ENCODE measurements at regions of chr5 and their contacts with region 1.

Region 1: GRCh38 chr5:83473346-83474163 is 2.0 kb downstream of the VCAN start:
- H3K4me3 Mint-ChIP-seq: peak overlapping the region; percentile 94
- H3K27ac Mint-ChIP-seq: peak overlapping the region; percentile 96
- H3K4me1 Mint-ChIP-seq: peaks cover 48% of the 10 kb centered on the region
- H3K27me3 Mint-ChIP-seq: peaks cover 18% of the 10 kb centered on the region

Region 2: GRCh38 chr5:82278095-82278918 is 1195.2 kb before region 1 on chr5 and contains the start of gene RPS23:
- intact Hi-C with region 1: loop called (anchors 10 kb)
- H3K4me3 Mint-ChIP-seq: peak within 1 kb of the TSS; percentile 90
- H3K27ac Mint-ChIP-seq: peak within 1 kb of the TSS; percentile 99
- H3K4me1 Mint-ChIP-seq: peaks cover 28% of the 10 kb centered on the region
- H3K27me3 Mint-ChIP-seq: no peaks in the 10 kb centered on the region

Region 3: DNA sequence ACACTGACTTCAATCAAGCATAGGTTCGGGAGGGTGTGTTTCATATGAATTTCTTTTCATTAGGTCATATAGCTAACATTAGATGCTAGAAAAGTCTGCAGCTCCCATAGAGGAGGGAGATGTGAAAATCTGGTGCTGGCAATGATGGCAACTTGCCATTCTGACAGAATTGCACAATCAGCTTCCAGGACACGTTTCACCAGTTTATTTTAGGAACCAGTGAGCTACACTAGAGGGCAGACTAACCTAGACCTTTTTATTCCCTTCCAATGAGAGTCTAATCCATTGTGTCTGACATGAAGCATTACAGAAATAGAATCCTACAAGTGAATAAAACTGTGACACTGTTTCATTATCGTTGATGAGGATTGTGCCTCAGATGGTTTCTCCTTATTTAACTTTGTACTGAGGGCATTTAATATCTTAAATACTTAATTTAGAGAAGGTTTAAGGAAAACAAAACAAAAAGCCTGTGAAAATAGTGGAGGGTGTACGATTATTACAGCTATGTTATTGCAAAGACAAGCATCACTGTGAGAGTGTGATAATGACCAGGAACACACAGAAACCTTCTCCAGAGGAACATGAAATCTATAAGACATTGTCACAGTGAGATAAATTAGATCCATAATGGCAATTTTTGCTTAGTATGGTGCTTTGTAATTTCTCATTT is 832.1 kb before region 1 on chr5:
- intact Hi-C with region 1: loop called (anchors 2 kb)
- H3K4me3 Mint-ChIP-seq: no peak overlapping the region
- H3K27ac Mint-ChIP-seq: no peak overlapping the region
- H3K4me1 Mint-ChIP-seq: peaks cover 7% of the 10 kb centered on the region
- H3K27me3 Mint-ChIP-seq: no peaks in the 10 kb centered on the region

Region 4: DNA sequence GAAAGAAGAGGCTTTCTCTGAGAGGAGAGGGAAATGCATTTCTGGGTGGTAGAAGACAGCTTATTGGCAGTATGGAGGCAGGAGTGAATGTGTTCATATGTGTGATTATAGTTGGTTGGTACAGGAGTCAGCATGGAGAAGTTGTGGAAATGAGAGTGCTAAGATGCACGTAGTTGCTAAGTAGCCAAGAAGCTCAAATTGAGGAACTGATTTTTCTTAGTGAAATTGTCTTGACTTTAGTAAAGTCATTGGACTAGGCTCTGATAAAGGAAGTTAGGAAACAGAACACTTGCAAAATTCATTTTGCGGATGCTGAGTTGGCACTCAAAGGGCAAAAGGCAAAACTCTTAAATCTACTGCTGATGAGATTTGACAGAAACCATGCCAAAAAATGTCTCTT is 160.9 kb before region 1 on chr5:
- intact Hi-C with region 1: loop called (anchors 5 kb)
- H3K4me3 Mint-ChIP-seq: peak overlapping the region; percentile 13
- H3K27ac Mint-ChIP-seq: peak overlapping the region; percentile 74
- H3K4me1 Mint-ChIP-seq: peaks cover 15% of the 10 kb centered on the region
- H3K27me3 Mint-ChIP-seq: no peaks in the 10 kb centered on the region

Region 5: DNA sequence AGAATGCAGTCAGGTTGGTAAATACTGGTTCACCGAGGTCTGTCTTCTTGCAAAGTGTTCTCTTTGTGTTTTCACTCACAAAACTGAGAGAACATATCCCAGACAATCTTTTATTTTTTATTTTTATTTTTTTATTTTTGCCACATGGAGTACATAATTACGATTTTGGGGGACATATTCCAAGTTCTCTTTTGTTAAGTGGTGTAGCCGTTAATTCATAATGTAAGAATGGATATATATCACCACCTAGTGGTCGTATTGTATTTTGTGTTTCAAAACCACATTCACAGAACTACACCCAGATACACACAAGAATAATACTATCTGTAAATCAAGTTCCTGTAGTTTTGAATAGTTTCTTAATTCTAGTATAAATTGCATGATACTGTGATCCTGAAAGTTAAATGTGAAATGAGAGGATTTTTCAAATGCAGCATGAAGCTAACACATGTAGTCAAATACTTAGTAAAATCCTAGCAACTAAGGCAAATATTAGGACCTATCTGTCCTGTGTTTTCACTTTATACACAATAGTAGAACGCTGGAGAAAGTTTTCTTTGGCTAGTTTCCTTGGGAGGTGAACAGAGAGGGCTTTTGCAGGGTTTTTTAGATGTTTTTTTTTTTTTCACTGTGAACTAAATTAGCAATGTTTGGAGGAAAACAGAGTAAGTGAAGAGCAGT is 90.7 kb after region 1 on chr5:
- intact Hi-C with region 1: loop called (anchors 5 kb)
- H3K4me3 Mint-ChIP-seq: no peak overlapping the region
- H3K27ac Mint-ChIP-seq: no peak overlapping the region
- H3K4me1 Mint-ChIP-seq: peaks cover under 1% of the 10 kb centered on the region
- H3K27me3 Mint-ChIP-seq: no peaks in the 10 kb centered on the region